Heart right ventricle (tissue), 16 donors: ENCODE measurements at regions of chr7 and their contacts with region 1.

Region 1: DNA sequence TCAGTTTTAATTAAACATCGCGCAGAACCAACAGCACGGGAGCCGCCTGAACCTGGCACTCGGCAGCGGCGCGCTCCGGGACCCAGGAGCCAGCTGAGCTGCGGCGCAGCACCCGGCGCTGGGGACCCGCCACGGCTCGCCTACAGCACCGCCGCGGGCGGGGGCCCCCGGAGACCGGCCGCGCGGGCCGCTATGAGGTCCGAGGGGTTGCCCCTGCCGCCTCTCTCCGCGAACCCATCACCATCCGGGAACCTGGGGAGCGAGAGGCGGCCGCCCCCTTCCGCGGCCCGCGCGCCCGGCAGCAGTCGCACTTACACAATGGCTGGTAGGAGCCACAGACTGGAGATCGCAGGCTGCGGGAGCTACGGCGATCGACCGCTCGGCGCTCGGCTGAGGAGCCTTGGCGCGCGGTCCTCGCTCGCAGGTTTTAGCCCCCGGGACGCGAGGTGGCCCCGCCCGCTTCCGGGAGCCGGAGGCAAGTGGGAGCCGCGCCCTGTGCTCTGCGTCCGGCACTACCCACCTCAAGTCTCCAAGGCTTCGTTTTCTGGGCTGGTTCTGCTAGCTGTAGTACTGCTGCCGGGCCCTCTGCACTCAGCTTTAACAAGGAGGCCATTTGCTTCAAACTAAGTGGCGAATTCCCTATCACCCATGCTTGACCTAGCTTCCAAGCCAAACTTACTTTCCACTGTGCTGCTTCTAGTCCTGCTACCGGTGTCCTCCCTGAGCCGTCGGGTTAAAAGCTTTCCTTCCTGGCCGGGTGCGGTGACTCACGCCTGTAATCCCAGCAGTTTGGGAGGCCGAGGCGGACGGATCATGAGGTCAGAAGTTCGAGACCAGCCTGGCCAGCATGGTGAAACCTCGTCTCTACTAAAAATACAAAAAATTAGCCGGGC is at the start of gene TPK1:
- DNase-seq: peak; percentile 93
- ATAC-seq: peak; percentile 95 to 100 (median 97)
- H3K4me3 ChIP-seq: peak within 1 kb of the TSS; percentile 66 to 92 (median 80)
- H3K27ac ChIP-seq: peak within 1 kb of the TSS; percentile 94 to 99 (median 98)
- H3K4me1 ChIP-seq: peaks cover 0 to 17% (median 13%) of the 10 kb centered on the region in 9 donors
- H3K27me3 ChIP-seq: no peaks in the 10 kb centered on the region
- CTCF ChIP-seq: peak in 2 of 9 donors; percentile 18 to 25
- total RNA-seq, gene TPK1: 4.2 to 10.8 (median 6.8) TPM

Region 2: GRCh38 chr7:144738708-144739314 is 97.1 kb before region 1 on chr7:
- intact Hi-C with region 1: loop called in 3 of 10 experiments (anchors 5 to 10 kb)
- DNase-seq: peak in 1 of 2 donors; percentile 6
- ATAC-seq: peak in 3 of 8 donors; percentile 42 to 46 (median 42)
- H3K4me3 ChIP-seq: no peak overlapping the region
- H3K27ac ChIP-seq: no peak overlapping the region
- H3K4me1 ChIP-seq: peaks cover 0 to 9% (median 0%) of the 10 kb centered on the region in 9 donors
- H3K27me3 ChIP-seq: no peaks in the 10 kb centered on the region
- CTCF ChIP-seq: peak; percentile 30 to 82 (median 71)

Region 3: GRCh38 chr7:144812379-144813283 is 23.3 kb before region 1 on chr7:
- intact Hi-C with region 1: loop called in 1 of 10 experiments (anchors 2 kb)
- DNase-seq: no peak
- ATAC-seq: peak in 2 of 8 donors; percentile 42 to 63
- H3K4me3 ChIP-seq: no peak overlapping the region
- H3K27ac ChIP-seq: peak overlapping the region in 4 of 10 donors; percentile 8 to 57 (median 26)
- H3K4me1 ChIP-seq: peaks cover 0 to 24% (median 17%) of the 10 kb centered on the region in 9 donors
- H3K27me3 ChIP-seq: no peaks in the 10 kb centered on the region
- CTCF ChIP-seq: no peak